Left ventricle myocardium inferior (tissue), 1 donor: ENCODE measurements at regions of chr2 and their contacts with region 1.

Region 1: DNA sequence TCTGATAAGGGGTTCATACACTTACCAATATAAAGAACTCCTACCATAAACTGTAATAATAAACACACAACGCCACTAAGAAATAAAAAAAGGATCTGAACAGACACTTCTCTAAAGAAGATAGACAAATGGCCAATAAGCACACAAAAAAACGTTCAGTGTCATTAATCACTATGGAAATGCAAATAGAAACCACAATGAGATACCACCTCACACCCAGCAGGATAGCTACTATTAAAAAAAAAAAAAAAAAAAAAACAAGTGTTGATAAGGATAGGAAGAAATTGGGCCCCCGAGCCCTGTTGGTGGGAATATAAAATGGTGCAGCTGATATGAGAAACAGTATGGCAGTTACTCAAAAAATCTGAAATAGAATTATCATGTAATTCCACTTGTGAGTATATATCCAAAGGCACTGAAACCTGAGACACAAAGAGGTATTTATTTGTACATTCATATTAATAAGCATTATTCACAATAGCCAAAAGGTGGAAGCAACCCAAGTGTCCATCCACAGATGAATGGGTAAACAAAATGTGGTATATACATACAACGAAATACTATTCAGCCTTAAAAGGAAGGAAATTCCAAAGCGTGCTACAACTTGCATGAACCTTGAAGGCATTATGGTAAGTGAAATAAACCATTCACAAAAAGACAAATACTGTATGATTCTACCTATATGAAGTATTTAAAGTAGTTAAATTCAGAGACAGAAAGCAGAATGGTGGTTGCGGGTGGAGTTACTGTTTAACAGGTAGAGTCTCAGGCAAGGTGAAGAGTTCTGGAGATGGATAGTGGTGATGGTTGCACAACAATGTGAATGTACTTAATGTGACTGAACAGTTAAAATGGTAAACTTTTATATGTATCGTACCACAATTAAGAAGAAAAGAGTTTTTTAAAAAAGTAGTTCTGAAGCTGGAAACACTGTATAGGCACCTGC is 17.9 kb downstream of the REV1 start:
- DNase-seq: no peak
- H3K4me3 ChIP-seq: no peak overlapping the region
- H3K27ac ChIP-seq: peak overlapping the region; percentile 54
- H3K4me1 ChIP-seq: peaks cover 97% of the 10 kb centered on the region
- H3K27me3 ChIP-seq: no peaks in the 10 kb centered on the region
- CTCF ChIP-seq: no peak

Region 2: DNA sequence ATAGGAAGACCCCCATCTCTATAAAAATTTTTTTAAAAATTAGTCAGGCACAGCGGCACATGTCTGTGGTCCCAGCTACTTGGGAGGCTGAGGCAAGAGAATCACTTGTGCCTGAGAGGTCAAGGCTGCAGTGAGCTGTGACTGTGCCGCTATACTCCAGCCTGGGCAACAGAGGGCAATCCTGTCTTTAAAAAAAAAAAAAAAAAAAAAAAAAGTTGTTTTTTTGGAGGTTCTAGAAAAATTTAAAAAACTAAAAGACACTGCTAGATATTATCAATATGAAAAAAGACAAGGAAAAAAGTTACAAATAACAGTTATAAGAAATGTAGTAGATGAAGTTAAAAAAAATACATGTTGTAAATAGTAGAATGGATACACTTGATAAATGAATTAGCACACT is 386.5 kb before region 1 on chr2:
- intact Hi-C with region 1: no loop called
- DNase-seq: no peak
- H3K4me3 ChIP-seq: no peak overlapping the region
- H3K27ac ChIP-seq: no peak overlapping the region
- H3K4me1 ChIP-seq: no peaks in the 10 kb centered on the region
- H3K27me3 ChIP-seq: peaks cover 39% of the 10 kb centered on the region
- CTCF ChIP-seq: no peak

Region 3: GRCh38 chr2:99348173-99348572 is 123.8 kb before region 1 on chr2:
- intact Hi-C with region 1: loop called (anchors 10 kb)
- DNase-seq: no peak
- H3K4me3 ChIP-seq: no peak overlapping the region
- H3K27ac ChIP-seq: no peak overlapping the region
- H3K4me1 ChIP-seq: peaks cover 25% of the 10 kb centered on the region
- H3K27me3 ChIP-seq: no peaks in the 10 kb centered on the region
- CTCF ChIP-seq: no peak

Region 4: GRCh38 chr2:99715956-99716355 is 244.0 kb after region 1 on chr2:
- intact Hi-C with region 1: no loop called
- DNase-seq: no peak
- H3K4me3 ChIP-seq: no peak overlapping the region
- H3K27ac ChIP-seq: no peak overlapping the region
- H3K4me1 ChIP-seq: peaks cover 13% of the 10 kb centered on the region
- H3K27me3 ChIP-seq: no peaks in the 10 kb centered on the region
- CTCF ChIP-seq: no peak